Activated T-helper 2 cell treated with anti-CD3 and anti-CD28 coated beads, Interferon-gamma antibody, Interleukin-2, Interleukin-4, amounts not matched to agents 10 μg/mL and 5 μg/mL and 100 μg/mL, durations not matched to agents 14 hours and 24 hours and 36 hours (primary cell): ENCODE measurements at regions of chr1 and their contacts with region 1.

Region 1: GRCh38 chr1:110106013-110106941 is 6.0 kb upstream of the UBL4B start:
- DNase-seq: peak; percentile 46
- H3K4me3 Mint-ChIP-seq: no peak overlapping the region
- H3K27ac Mint-ChIP-seq: no peak overlapping the region
- H3K4me1 Mint-ChIP-seq: no peaks in the 10 kb centered on the region
- H3K27me3 Mint-ChIP-seq: peaks cover 8% of the 10 kb centered on the region

Region 2: GRCh38 chr1:109954041-109954512 is 152.2 kb before region 1 on chr1:
- intact Hi-C with region 1: no loop called
- DNase-seq: no peak
- H3K4me3 Mint-ChIP-seq: no peak overlapping the region
- H3K27ac Mint-ChIP-seq: no peak overlapping the region
- H3K4me1 Mint-ChIP-seq: no peaks in the 10 kb centered on the region
- H3K27me3 Mint-ChIP-seq: peaks cover 11% of the 10 kb centered on the region

Region 3: GRCh38 chr1:110034451-110035235 is 71.6 kb before region 1 on chr1 and contains the start of gene STRIP1:
- intact Hi-C with region 1: no loop called
- DNase-seq: peak; percentile 92
- H3K4me3 Mint-ChIP-seq: peak within 1 kb of the TSS; percentile 90
- H3K27ac Mint-ChIP-seq: peak within 1 kb of the TSS; percentile 76
- H3K4me1 Mint-ChIP-seq: peaks cover 40% of the 10 kb centered on the region
- H3K27me3 Mint-ChIP-seq: no peaks in the 10 kb centered on the region
- total RNA-seq, gene STRIP1: 37.4 and 39.1 TPM in 2 replicates

Region 4: GRCh38 chr1:110053557-110054428 is 52.5 kb before region 1 on chr1:
- intact Hi-C with region 1: loop called (anchors 2 kb)
- DNase-seq: peak; percentile 40
- H3K4me3 Mint-ChIP-seq: no peak overlapping the region
- H3K27ac Mint-ChIP-seq: no peak overlapping the region
- H3K4me1 Mint-ChIP-seq: no peaks in the 10 kb centered on the region
- H3K27me3 Mint-ChIP-seq: no peaks in the 10 kb centered on the region

Region 5: GRCh38 chr1:110087812-110088738 is 18.2 kb before region 1 on chr1:
- intact Hi-C with region 1: loop called (anchors 1 kb)
- DNase-seq: peak; percentile 27
- H3K4me3 Mint-ChIP-seq: no peak overlapping the region
- H3K27ac Mint-ChIP-seq: no peak overlapping the region
- H3K4me1 Mint-ChIP-seq: peaks cover 9% of the 10 kb centered on the region
- H3K27me3 Mint-ChIP-seq: peaks cover 58% of the 10 kb centered on the region